ENCODE measurements at regions of chr1 and their contacts with region 1.

Region 1: GRCh38 chr1:42747125-42747524 is 7.1 kb upstream of the CLDN19 start:
- DNase-seq: peak; percentile 47
- H3K4me3 Mint-ChIP-seq: no peak overlapping the region
- H3K27ac Mint-ChIP-seq: no peak overlapping the region
- H3K4me1 Mint-ChIP-seq: no peaks in the 10 kb centered on the region
- H3K27me3 Mint-ChIP-seq: no peaks in the 10 kb centered on the region

Region 2: GRCh38 chr1:42756956-42757891 is 10.1 kb after region 1 on chr1:
- CTCF ChIA-PET with region 1: interaction called, 12 read pairs
- POLR2A ChIA-PET with region 1: no interaction called
- intact Hi-C with region 1: no loop called
- DNase-seq: no peak
- H3K4me3 Mint-ChIP-seq: no peak overlapping the region
- H3K27ac Mint-ChIP-seq: no peak overlapping the region
- H3K4me1 Mint-ChIP-seq: no peaks in the 10 kb centered on the region
- H3K27me3 Mint-ChIP-seq: no peaks in the 10 kb centered on the region

Measured in activated CD4-positive, alpha-beta memory T cell treated with anti-CD3 and anti-CD28 coated beads for 36 hours (primary cell).